PC-3 (cell line): ENCODE measurements at regions of chr11 and their contacts with region 1.

Region 1: GRCh38 chr11:43680521-43681400 is at the start of gene HSD17B12:
- DNase-seq: peak; percentile 99
- ATAC-seq: peak; percentile 96
- H3K4me3 ChIP-seq: peak within 1 kb of the TSS; percentile 98
- H3K27ac ChIP-seq: peak within 1 kb of the TSS; percentile 76
- H3K4me1 ChIP-seq: peaks cover 17% of the 10 kb centered on the region
- H3K27me3 ChIP-seq: no peaks in the 10 kb centered on the region
- CTCF ChIP-seq: no peak
- total RNA-seq, gene HSD17B12: 77.6 and 102 TPM in 2 replicates

Region 2: DNA sequence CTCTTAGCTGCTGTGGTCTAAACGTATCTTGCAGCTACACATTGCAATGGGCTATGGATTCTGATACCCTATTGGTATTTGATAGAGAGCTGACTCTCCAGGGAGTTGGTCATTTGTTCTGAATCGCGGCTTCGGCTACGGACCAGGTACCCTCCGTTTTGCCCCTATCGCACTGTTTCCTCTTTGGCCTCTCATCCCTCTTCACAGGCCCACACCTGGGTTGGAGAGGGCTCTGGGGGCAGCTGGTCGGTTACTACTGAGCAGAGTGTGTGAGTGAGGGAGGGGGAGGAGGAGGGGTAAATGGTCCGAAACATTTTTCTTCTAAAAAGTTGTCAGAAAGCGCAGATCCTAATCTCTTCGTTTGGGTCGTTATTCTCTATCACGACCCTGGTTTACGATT is 49.0 kb before region 1 on chr11:
- CTCF ChIA-PET with region 1: no interaction called
- POLR2A ChIA-PET with region 1: no interaction called
- intact Hi-C with region 1: no loop called
- DNase-seq: no peak
- ATAC-seq: no peak
- H3K4me3 ChIP-seq: no peak overlapping the region
- H3K27ac ChIP-seq: no peak overlapping the region
- H3K4me1 ChIP-seq: no peaks in the 10 kb centered on the region
- H3K27me3 ChIP-seq: peaks cover 57% of the 10 kb centered on the region
- CTCF ChIP-seq: no peak

Region 3: DNA sequence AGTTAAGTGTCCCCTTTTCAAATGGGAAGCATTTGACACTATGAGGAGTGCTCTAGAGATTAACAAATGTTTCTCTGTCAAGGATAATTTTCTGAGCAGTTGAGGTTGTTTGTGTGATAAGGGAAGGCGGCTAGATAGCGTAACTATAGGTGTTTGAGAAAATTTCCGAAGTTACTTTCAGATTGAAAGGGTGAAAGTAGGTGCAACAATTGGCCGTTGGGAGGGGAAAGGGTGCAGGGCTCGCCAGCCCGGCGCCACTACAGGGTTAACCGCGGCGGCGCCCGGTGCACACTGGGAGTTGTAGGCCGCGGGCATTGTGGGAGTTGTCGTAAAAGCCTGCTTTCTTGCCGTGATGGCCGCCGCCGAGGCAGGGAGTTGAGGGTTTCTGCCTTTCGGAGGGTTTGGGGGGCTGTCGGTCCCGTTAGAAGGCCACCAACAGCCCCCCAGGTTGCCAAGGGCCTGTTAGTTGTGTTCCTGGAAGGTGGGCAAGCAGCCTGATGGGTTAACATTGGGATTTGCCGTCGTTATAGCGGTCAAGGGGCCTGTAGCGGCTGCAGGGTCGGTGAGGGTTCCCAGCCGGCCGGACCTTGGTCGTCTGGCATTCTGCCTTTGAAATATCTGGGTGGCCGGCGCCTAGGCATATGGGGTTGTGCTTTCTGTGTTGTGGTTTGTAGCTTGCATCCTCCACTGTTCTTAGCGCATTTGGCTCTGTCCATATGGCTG is 36.7 kb before region 1 on chr11:
- CTCF ChIA-PET with region 1: no interaction called
- POLR2A ChIA-PET with region 1: no interaction called
- intact Hi-C with region 1: loop called (anchors 2 kb)
- DNase-seq: peak; percentile 74
- ATAC-seq: peak; percentile 99
- H3K4me3 ChIP-seq: peak overlapping the region; percentile 94
- H3K27ac ChIP-seq: peak overlapping the region; percentile 14; the same call in 1 of the 2 replicates
- H3K4me1 ChIP-seq: peaks cover 15% of the 10 kb centered on the region
- H3K27me3 ChIP-seq: peaks cover 25% of the 10 kb centered on the region
- CTCF ChIP-seq: no peak

Region 4: GRCh38 chr11:43802509-43802908 is 121.7 kb after region 1 on chr11:
- CTCF ChIA-PET with region 1: no interaction called
- POLR2A ChIA-PET with region 1: no interaction called
- intact Hi-C with region 1: loop called (anchors 5 kb)
- DNase-seq: peak; percentile 20
- ATAC-seq: peak; percentile 40; the same call in 1 of the 2 replicates
- H3K4me3 ChIP-seq: no peak overlapping the region
- H3K27ac ChIP-seq: no peak overlapping the region
- H3K4me1 ChIP-seq: peaks cover 8% of the 10 kb centered on the region
- H3K27me3 ChIP-seq: no peaks in the 10 kb centered on the region
- CTCF ChIP-seq: peak; percentile 57